Adrenal gland (tissue), 19 donors: ENCODE measurements at regions of chr12 and their contacts with region 1.

Region 1: GRCh38 chr12:79737875-79738718 is 47.3 kb upstream of the PAWR start:
- DNase-seq: peak in 6 of 7 donors; percentile 18 to 51 (median 30)
- H3K4me3 ChIP-seq: no peak overlapping the region
- H3K27ac ChIP-seq: no peak overlapping the region
- H3K4me1 ChIP-seq: no peaks in the 10 kb centered on the region
- H3K27me3 ChIP-seq: peaks cover 4% of the 10 kb centered on the region
- CTCF ChIP-seq: peak; percentile 43 to 72 (median 58)
- POLR2A ChIP-seq: no peak

Region 2: GRCh38 chr12:79415746-79416435 is 322.2 kb before region 1 on chr12:
- intact Hi-C with region 1: loop called in 1 of 2 experiments (anchors 5 kb)
- DNase-seq: no peak
- H3K4me3 ChIP-seq: no peak overlapping the region
- H3K27ac ChIP-seq: no peak overlapping the region
- H3K4me1 ChIP-seq: peaks cover 0 to 8% of the 10 kb centered on the region in 2 donors
- H3K27me3 ChIP-seq: no peaks in the 10 kb centered on the region
- CTCF ChIP-seq: no peak
- POLR2A ChIP-seq: no peak

Region 3: GRCh38 chr12:79547735-79548609 is 190.1 kb before region 1 on chr12:
- intact Hi-C with region 1: loop called (anchors 5 to 10 kb)
- DNase-seq: peak; percentile 35 to 76 (median 57)
- H3K4me3 ChIP-seq: no peak overlapping the region
- H3K27ac ChIP-seq: peak overlapping the region in 1 of 5 donors; percentile 47
- H3K4me1 ChIP-seq: peaks cover 0 to 5% of the 10 kb centered on the region in 2 donors
- H3K27me3 ChIP-seq: no peaks in the 10 kb centered on the region
- CTCF ChIP-seq: peak; percentile 63 to 71 (median 70)
- POLR2A ChIP-seq: no peak

Region 4: GRCh38 chr12:79858518-79858917 is 120.4 kb after region 1 on chr12:
- intact Hi-C with region 1: no loop called
- DNase-seq: no peak
- H3K4me3 ChIP-seq: no peak overlapping the region
- H3K27ac ChIP-seq: no peak overlapping the region
- H3K4me1 ChIP-seq: peaks cover 0 to 10% of the 10 kb centered on the region in 2 donors
- H3K27me3 ChIP-seq: no peaks in the 10 kb centered on the region
- CTCF ChIP-seq: no peak
- POLR2A ChIP-seq: no peak

Region 5: DNA sequence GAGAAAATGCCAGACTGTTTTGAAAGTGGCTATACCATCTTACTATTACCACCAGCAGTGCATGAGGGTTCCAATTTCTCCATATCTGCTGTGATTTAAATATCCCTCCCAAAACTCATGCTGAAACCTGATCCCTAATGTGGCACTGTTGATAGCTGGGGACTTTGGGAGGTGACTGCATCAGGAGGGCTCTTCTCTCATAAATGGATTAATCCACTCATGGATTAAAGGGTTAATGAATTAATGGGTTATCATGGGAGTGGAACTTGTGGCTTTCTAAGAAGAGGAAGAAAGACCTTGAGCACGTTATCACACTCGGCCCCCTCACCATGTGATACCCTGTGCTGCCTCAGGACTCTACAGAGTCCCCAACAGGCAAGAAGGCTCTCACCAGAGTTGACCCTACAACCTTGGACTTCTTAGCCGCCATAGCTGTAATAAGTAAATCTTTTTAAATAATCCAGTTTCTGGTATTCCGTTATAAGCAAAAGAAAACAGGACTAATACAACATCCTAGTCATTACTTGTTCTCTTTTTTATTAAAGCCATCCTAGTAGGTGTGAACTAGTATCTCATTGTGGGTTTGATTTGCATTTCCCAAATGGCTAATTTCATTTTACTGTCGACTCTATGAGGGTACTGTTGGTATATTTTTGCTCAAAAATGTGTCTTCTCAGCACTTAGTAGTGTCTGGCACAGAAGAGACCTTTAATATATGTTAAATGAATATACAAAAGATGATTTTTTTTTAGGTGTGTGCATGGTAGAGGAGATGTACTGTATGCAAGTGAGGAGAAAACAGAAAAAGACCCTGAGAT is 182.5 kb after region 1 on chr12:
- intact Hi-C with region 1: no loop called
- DNase-seq: no peak
- H3K4me3 ChIP-seq: no peak overlapping the region
- H3K27ac ChIP-seq: no peak overlapping the region
- H3K4me1 ChIP-seq: peaks cover 0 to 29% of the 10 kb centered on the region in 2 donors
- H3K27me3 ChIP-seq: no peaks in the 10 kb centered on the region
- CTCF ChIP-seq: no peak
- POLR2A ChIP-seq: no peak